ENCODE measurements at regions of chr16 and their contacts with region 1.

Region 1: DNA sequence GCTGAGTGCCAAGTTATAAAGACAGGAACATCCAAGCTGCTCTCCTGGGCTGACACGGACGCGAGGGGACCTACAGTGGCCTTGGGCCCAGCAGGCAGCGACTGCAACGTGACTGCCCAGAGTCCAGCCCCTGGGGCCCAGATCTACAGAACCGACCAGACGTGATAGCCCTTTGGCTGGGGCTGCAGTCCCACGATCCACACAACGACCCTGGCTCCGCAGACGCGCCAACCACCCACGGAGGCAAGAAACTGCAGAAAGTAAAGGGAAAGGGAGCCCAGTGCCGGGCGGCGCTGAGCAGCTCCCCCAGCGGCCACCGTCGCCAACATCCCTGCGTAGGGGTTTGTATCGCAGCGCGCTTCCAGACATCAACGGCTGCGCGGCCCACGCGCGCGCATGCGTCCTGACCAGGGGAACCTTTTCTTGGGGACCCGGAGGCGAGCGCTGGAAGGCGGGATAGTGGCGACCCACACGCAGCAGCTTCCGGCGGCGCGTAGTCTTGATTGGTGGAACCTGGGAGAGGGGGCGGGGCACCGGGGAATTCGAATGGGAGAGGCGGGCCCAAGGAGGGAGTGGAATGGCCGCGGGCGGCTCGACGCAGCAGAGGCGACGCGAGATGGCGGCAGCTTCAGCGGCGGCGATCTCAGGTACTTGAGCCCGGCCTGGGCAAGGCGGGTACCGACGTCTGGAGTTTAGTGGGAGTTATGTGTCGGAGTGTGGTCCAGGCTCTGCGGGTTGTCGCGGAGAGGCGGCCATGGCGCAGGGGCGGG is at the start of gene KIF22:
- DNase-seq: peak; percentile 98 to 100 (median 100)
- ATAC-seq: peak; percentile 98
- H3K4me3 ChIP-seq: peak within 1 kb of the TSS; percentile 83
- H3K4me3 Mint-ChIP-seq: peak within 1 kb of the TSS; percentile 92 to 100 (median 98)
- H3K27ac ChIP-seq: peak within 1 kb of the TSS; percentile 88
- H3K27ac Mint-ChIP-seq: peak within 1 kb of the TSS; percentile 93 to 99 (median 99)
- H3K4me1 ChIP-seq: peaks cover 21 to 29% of the 10 kb centered on the region in 2 donors
- H3K4me1 Mint-ChIP-seq: peaks cover 23 to 59% (median 46%) of the 10 kb centered on the region in 7 donors
- H3K27me3 ChIP-seq: no peaks in the 10 kb centered on the region
- H3K27me3 Mint-ChIP-seq: peaks cover 0 to 2% (median 0%) of the 10 kb centered on the region in 5 donors
- total RNA-seq, gene KIF22: 62.5 to 141 (median 81.3) TPM

Region 2: DNA sequence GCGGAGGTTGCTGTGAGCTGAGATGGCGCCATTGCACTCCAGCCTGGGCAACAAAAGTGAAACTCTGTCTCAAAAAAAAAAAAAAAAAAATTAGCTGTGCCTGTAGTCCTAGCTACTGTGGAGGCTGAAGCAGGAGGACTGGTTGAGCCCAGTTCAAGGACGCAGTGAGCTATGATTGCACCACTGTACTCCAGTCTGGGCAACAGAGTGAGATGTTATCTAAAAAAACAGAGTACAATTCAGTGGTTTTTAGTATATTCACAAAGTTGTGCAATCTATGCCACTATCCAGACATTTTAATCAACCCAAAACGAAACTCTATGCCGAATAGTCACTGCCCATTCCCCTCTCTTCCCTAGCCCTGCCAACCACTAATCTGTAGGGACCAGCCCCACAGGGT is 69.7 kb before region 1 on chr16:
- CTCF ChIA-PET with region 1: interaction called, 4 read pairs
- POLR2A ChIA-PET with region 1: interaction called, 5 read pairs
- intact Hi-C with region 1: loop called in 1 of 2 experiments (anchors 1 kb)
- DNase-seq: no peak
- ATAC-seq: no peak
- H3K4me3 ChIP-seq: no peak overlapping the region
- H3K4me3 Mint-ChIP-seq: peak overlapping the region in 1 of 10 donors; percentile 49
- H3K27ac ChIP-seq: no peak overlapping the region
- H3K27ac Mint-ChIP-seq: no peak overlapping the region
- H3K4me1 ChIP-seq: no peaks in the 10 kb centered on the region
- H3K4me1 Mint-ChIP-seq: peaks cover 11 to 24% (median 20%) of the 10 kb centered on the region in 7 donors
- H3K27me3 ChIP-seq: no peaks in the 10 kb centered on the region
- H3K27me3 Mint-ChIP-seq: peaks cover 0 to 6% (median 0%) of the 10 kb centered on the region in 5 donors

Region 3: GRCh38 chr16:29738514-29738913 is 51.9 kb before region 1 on chr16:
- CTCF ChIA-PET with region 1: interaction called, 25 read pairs
- POLR2A ChIA-PET with region 1: interaction called, 79 read pairs
- intact Hi-C with region 1: loop called (anchors 1 to 2 kb)
- DNase-seq: peak in 7 of 9 donors; percentile 66 to 86 (median 82)
- ATAC-seq: peak; percentile 90
- H3K4me3 ChIP-seq: peak overlapping the region; percentile 18
- H3K4me3 Mint-ChIP-seq: peak overlapping the region; percentile 50 to 96 (median 64)
- H3K27ac ChIP-seq: peak overlapping the region; percentile 80
- H3K27ac Mint-ChIP-seq: peak overlapping the region; percentile 82 to 99 (median 91)
- H3K4me1 ChIP-seq: peaks cover 69 to 70% of the 10 kb centered on the region in 2 donors
- H3K4me1 Mint-ChIP-seq: peaks cover 63 to 91% (median 84%) of the 10 kb centered on the region in 7 donors
- H3K27me3 ChIP-seq: no peaks in the 10 kb centered on the region
- H3K27me3 Mint-ChIP-seq: no peaks in the 10 kb centered on the region

Region 4: DNA sequence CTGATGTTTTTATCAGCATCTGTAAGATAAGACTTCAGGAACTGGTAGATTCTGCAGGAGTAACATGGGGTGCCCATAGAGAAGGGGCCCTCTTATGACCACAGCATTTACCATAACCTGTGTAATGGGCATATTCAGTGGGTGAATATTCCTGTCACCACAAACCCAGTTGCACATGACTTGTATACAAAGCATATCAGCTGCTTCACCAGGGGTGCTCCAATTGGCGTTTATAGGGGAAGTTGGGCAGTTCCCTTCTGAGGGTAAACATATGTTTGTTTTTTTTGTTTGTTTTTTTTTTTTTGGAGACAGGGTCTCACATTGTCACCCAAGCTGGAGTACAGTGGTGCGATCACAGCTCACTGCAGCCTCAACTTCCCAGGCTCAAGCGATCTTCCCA is 23.8 kb before region 1 on chr16:
- CTCF ChIA-PET with region 1: interaction called, 4 read pairs
- POLR2A ChIA-PET with region 1: interaction called, 10 read pairs
- intact Hi-C with region 1: no loop called
- DNase-seq: no peak
- ATAC-seq: no peak
- H3K4me3 ChIP-seq: no peak overlapping the region
- H3K4me3 Mint-ChIP-seq: no peak overlapping the region
- H3K27ac ChIP-seq: no peak overlapping the region
- H3K27ac Mint-ChIP-seq: peak overlapping the region in 1 of 9 donors; percentile 30
- H3K4me1 ChIP-seq: no peaks in the 10 kb centered on the region
- H3K4me1 Mint-ChIP-seq: peaks cover 7 to 27% (median 21%) of the 10 kb centered on the region in 7 donors
- H3K27me3 ChIP-seq: no peaks in the 10 kb centered on the region
- H3K27me3 Mint-ChIP-seq: peaks cover 0 to 3% (median 0%) of the 10 kb centered on the region in 5 donors

Region 5: DNA sequence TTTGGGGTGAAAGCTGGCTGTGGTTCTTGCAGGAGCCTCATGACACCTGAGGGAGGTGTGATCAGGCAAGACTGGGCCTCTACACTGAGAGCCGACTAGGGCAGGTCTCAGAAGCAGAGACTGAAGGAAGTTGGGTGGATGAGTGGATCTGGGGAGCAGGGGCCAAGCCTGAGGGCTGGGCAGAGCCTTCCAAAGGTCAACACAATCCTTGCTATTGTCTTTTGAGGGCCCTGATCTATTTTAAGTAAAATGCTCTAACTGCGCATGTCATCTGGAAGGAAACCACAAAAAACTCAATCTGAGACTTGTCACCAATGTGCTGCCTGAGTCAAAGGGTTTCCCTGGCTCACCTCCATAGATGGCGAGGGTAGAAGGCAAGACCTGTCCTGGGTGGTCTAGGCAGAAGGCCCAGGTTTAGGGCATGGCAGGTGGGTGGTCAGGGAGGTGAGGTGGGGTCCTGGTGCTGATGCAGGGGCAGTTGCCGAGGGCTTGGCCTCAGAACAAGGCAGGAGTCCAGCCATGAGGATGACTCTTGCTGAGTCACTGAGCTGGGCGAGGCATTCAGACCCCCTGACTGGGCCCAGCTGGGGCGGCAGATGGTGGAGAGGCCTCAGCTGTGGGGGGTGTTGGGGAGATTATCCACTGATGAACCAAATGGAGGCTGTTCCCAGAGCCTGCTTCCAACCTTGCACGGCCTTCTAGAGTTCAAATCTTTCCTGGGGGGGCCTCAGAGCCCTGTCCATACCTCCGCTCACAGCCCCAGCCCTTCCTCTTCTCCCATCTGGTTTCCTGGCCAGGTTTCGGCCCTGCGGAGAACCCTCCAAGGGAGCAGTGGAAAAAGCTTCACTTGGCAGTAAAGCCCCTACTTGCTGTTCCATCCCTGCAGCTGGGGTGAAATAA is 35.0 kb after region 1 on chr16:
- CTCF ChIA-PET with region 1: interaction called, 4 read pairs
- POLR2A ChIA-PET with region 1: interaction called, 16 read pairs
- intact Hi-C with region 1: loop called in 1 of 2 experiments (anchors 1 kb)
- DNase-seq: peak in 6 of 9 donors; percentile 36 to 52 (median 43)
- ATAC-seq: no peak
- H3K4me3 ChIP-seq: peak overlapping the region; percentile 44
- H3K4me3 Mint-ChIP-seq: peak overlapping the region; percentile 70 to 95 (median 86)
- H3K27ac ChIP-seq: peak overlapping the region; percentile 72
- H3K27ac Mint-ChIP-seq: peak overlapping the region; percentile 56 to 99 (median 96)
- H3K4me1 ChIP-seq: peaks cover 61 to 81% of the 10 kb centered on the region in 2 donors
- H3K4me1 Mint-ChIP-seq: peaks cover 39 to 97% (median 57%) of the 10 kb centered on the region in 7 donors
- H3K27me3 ChIP-seq: no peaks in the 10 kb centered on the region
- H3K27me3 Mint-ChIP-seq: no peaks in the 10 kb centered on the region

Region 6: GRCh38 chr16:29995911-29996772 is 205.8 kb after region 1 on chr16 and contains the start of gene INO80E:
- CTCF ChIA-PET with region 1: no interaction called
- POLR2A ChIA-PET with region 1: interaction called, 3 read pairs
- intact Hi-C with region 1: loop called in 1 of 2 experiments (anchors 1 kb)
- DNase-seq: peak; percentile 94 to 99 (median 98)
- ATAC-seq: peak; percentile 99
- H3K4me3 ChIP-seq: peak within 1 kb of the TSS; percentile 100
- H3K4me3 Mint-ChIP-seq: peak within 1 kb of the TSS; percentile 86 to 99 (median 98)
- H3K27ac ChIP-seq: peak within 1 kb of the TSS; percentile 99
- H3K27ac Mint-ChIP-seq: peak within 1 kb of the TSS; percentile 93 to 99 (median 97)
- H3K4me1 ChIP-seq: peaks cover 16 to 18% of the 10 kb centered on the region in 2 donors
- H3K4me1 Mint-ChIP-seq: peaks cover 24 to 53% (median 38%) of the 10 kb centered on the region in 7 donors
- H3K27me3 ChIP-seq: no peaks in the 10 kb centered on the region
- H3K27me3 Mint-ChIP-seq: no peaks in the 10 kb centered on the region
- total RNA-seq, gene INO80E: 71.7 to 141 (median 95.8) TPM

Measured in naive thymus-derived CD4-positive, alpha-beta T cell (primary cell).